ENCODE measurements at regions of chr3 and their contacts with region 1.

Region 1: DNA sequence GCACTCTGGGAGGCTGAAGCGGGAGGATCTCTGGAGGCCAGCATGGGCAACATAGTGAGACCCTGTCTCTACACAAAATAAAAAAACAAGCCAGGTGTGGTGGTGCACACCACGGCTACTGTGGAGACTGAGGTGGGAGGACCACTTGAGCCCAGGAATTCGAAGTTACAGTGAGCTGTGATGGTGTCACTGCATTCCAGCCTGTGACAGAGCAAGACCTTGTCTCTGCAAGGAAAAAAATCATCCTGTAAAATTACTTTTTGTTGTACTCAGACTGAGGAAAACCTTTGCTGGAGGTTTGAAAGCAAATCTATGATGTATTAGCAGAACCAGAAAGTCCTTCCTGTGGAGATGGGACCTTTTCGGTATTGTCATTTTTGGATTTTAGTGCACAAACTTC is 63.3 kb downstream of the ATP1B3 start:
- DNase-seq: no peak
- H3K4me3 ChIP-seq: no peak overlapping the region
- H3K4me3 Mint-ChIP-seq: no peak overlapping the region
- H3K27ac ChIP-seq: no peak overlapping the region
- H3K27ac Mint-ChIP-seq: no peak overlapping the region
- H3K4me1 ChIP-seq: peaks cover 7 to 14% of the 10 kb centered on the region in 2 donors
- H3K4me1 Mint-ChIP-seq: peaks cover 18% of the 10 kb centered on the region
- H3K27me3 ChIP-seq: no peaks in the 10 kb centered on the region
- H3K27me3 Mint-ChIP-seq: peaks cover 0 to 5% (median 3%) of the 10 kb centered on the region in 3 donors
- CTCF ChIP-seq: no peak

Region 2: DNA sequence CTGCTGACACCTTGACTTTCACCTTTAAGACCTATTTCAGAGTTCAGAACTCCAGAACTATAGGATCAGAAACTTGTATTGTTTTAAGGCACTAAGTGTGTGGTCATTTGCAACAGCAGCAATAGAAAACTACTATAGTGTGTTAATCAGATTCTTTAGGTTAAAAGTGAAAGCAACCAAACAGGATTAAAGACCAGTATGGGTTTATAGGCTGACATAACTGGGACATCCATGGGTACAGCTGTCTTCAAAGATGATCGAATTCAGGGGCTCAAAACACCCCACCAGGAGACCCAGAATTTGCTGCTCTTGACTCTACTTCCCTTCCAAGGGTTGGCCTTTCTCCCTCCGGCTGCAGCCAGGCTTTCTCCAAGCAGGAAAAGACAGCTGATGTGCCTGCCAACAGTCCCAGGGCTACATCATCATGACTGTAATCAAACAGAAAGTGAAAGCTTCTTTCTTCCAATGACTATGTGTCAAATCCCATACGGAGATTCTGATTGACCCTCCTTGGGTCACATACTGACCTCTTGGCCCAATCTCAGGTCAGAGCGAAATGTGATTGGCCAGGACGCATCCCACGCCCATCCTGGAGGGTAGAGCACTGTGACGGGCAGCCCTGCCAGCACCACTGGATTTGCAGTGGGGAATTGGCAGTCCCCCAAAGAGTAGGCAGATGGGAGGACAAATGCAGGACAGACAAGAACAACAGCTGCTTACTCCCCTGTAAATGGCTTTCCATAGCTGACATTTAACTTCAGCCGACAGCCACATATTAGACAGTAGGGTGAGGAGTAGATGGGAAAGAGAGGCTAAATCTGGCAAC is 253.1 kb before region 1 on chr3:
- intact Hi-C with region 1: no loop called
- DNase-seq: peak; percentile 40 to 71 (median 54)
- H3K4me3 ChIP-seq: peak overlapping the region; percentile 26 to 73 (median 50)
- H3K4me3 Mint-ChIP-seq: peak overlapping the region; percentile 81 to 95
- H3K27ac ChIP-seq: peak overlapping the region; percentile 31 to 90
- H3K27ac Mint-ChIP-seq: peak overlapping the region; percentile 87 to 98 (median 94)
- H3K4me1 ChIP-seq: peaks cover 50 to 72% of the 10 kb centered on the region in 2 donors
- H3K4me1 Mint-ChIP-seq: peaks cover 41% of the 10 kb centered on the region
- H3K27me3 ChIP-seq: no peaks in the 10 kb centered on the region
- H3K27me3 Mint-ChIP-seq: peaks cover 0 to 2% (median 0%) of the 10 kb centered on the region in 3 donors
- CTCF ChIP-seq: no peak

Region 3: DNA sequence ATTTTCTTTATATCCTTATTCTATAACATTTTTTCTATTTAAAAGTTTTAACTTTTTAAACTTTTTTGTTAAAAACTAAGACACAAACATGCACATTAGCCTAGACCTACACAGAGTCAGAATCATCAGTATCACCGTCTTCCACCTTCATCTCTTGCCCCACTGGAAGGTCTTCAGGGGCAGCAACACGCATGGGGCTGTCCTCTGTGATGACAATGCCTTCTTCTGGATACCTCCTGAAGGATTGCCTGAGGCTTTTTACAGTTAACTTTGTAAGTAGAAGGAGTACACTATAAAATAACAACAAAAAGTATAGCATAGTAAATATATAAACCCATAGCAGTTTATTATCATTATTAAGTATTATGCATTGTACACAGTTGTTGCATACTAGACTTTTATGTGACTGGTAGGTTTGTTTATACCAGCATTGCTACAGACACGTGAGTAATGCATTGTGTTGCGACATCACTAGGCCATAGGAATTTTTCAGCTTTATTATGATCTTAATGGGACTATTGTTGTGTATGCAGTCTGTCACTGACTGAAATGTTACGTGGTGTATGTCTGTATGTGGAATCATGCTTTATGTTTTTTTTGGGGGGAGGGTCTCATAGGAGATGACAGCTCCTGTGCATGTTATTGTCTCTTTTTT is 45.1 kb before region 1 on chr3:
- intact Hi-C with region 1: loop called in 1 of 2 experiments (anchors 2 kb)
- DNase-seq: peak; percentile 70 to 82 (median 81)
- H3K4me3 ChIP-seq: no peak overlapping the region
- H3K4me3 Mint-ChIP-seq: no peak overlapping the region
- H3K27ac ChIP-seq: peak overlapping the region in 1 of 2 donors; percentile 20
- H3K27ac Mint-ChIP-seq: peak overlapping the region in 3 of 7 donors; percentile 17 to 80 (median 72)
- H3K4me1 ChIP-seq: peaks cover 3 to 7% of the 10 kb centered on the region in 2 donors
- H3K4me1 Mint-ChIP-seq: peaks cover 11% of the 10 kb centered on the region
- H3K27me3 ChIP-seq: no peaks in the 10 kb centered on the region
- H3K27me3 Mint-ChIP-seq: no peaks in the 10 kb centered on the region
- CTCF ChIP-seq: no peak

Region 4: DNA sequence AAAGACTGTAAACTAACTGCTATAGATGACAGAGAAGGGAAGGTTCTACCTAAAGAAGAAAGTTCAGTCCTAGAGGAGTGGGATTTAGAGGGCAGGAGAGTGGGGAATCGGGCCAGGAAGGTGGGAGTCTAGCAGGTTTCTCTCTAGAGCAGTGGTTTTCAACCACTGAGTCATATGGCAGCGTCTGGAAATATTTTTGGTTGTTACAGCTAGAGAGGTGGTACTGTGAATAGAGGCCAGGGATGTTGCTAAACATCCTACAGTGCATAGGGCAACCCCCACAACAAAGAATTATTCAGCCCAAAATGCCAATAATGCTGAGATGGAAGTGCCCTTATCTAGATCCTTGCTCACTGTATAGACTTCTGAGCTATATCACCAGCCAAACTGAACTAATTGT is 34.6 kb before region 1 on chr3:
- intact Hi-C with region 1: no loop called
- DNase-seq: no peak
- H3K4me3 ChIP-seq: no peak overlapping the region
- H3K4me3 Mint-ChIP-seq: no peak overlapping the region
- H3K27ac ChIP-seq: no peak overlapping the region
- H3K27ac Mint-ChIP-seq: peak overlapping the region in 1 of 7 donors; percentile 4
- H3K4me1 ChIP-seq: no peaks in the 10 kb centered on the region
- H3K4me1 Mint-ChIP-seq: no peaks in the 10 kb centered on the region
- H3K27me3 ChIP-seq: no peaks in the 10 kb centered on the region
- H3K27me3 Mint-ChIP-seq: no peaks in the 10 kb centered on the region
- CTCF ChIP-seq: no peak

Region 5: GRCh38 chr3:141920701-141921100 is 19.1 kb before region 1 on chr3:
- intact Hi-C with region 1: no loop called
- DNase-seq: no peak
- H3K4me3 ChIP-seq: no peak overlapping the region
- H3K4me3 Mint-ChIP-seq: no peak overlapping the region
- H3K27ac ChIP-seq: no peak overlapping the region
- H3K27ac Mint-ChIP-seq: no peak overlapping the region
- H3K4me1 ChIP-seq: no peaks in the 10 kb centered on the region
- H3K4me1 Mint-ChIP-seq: no peaks in the 10 kb centered on the region
- H3K27me3 ChIP-seq: no peaks in the 10 kb centered on the region
- H3K27me3 Mint-ChIP-seq: peaks cover 0 to 2% (median 0%) of the 10 kb centered on the region in 3 donors
- CTCF ChIP-seq: no peak

Region 6: DNA sequence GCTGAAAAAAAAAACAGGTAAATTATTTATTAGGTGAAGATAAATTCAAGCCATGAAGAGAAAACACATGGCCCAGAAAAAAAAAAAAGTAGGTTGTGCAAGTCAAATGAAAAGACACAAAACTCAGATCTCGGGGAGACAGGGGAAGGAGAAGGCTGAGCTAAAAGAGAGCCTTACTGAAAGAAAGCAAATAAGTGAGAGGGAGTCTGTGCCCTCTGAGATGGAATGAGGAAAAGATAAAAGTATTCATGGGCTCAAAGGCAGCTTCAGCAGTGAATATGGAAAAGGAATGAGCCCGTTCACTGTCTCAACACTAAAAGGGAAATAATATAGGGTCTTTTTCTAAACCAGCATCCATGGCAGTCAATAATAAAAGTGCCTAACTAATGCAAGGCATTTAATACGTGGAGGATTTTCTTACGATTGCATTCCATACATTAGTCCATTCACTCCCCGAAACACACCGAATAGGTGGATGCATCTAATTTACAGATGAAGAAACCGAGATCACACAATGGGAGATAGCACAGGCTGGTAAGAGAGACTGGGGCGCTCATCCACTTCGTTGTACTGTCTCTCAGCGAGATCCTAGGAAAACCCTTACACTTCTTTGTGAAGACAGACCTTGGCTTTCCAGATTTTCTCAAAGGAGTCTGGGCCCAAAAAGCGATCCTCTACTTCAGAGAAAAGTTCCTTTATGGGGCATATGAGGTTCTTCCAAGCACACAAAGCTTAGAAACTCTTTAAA is 208.5 kb after region 1 on chr3:
- intact Hi-C with region 1: no loop called
- DNase-seq: no peak
- H3K4me3 ChIP-seq: peak overlapping the region; percentile 60 to 86 (median 84)
- H3K4me3 Mint-ChIP-seq: peak overlapping the region; percentile 83 to 95
- H3K27ac ChIP-seq: peak overlapping the region in 1 of 2 donors; percentile 67
- H3K27ac Mint-ChIP-seq: peak overlapping the region in 3 of 7 donors; percentile 54 to 79 (median 59)
- H3K4me1 ChIP-seq: peaks cover 14 to 17% of the 10 kb centered on the region in 2 donors
- H3K4me1 Mint-ChIP-seq: peaks cover 16% of the 10 kb centered on the region
- H3K27me3 ChIP-seq: peaks cover 0 to 5% of the 10 kb centered on the region in 2 donors
- H3K27me3 Mint-ChIP-seq: peaks cover 0 to 4% (median 3%) of the 10 kb centered on the region in 3 donors
- CTCF ChIP-seq: no peak